Calu3 (cell line): ENCODE measurements at regions of chr3 and their contacts with region 1.

Region 1: DNA sequence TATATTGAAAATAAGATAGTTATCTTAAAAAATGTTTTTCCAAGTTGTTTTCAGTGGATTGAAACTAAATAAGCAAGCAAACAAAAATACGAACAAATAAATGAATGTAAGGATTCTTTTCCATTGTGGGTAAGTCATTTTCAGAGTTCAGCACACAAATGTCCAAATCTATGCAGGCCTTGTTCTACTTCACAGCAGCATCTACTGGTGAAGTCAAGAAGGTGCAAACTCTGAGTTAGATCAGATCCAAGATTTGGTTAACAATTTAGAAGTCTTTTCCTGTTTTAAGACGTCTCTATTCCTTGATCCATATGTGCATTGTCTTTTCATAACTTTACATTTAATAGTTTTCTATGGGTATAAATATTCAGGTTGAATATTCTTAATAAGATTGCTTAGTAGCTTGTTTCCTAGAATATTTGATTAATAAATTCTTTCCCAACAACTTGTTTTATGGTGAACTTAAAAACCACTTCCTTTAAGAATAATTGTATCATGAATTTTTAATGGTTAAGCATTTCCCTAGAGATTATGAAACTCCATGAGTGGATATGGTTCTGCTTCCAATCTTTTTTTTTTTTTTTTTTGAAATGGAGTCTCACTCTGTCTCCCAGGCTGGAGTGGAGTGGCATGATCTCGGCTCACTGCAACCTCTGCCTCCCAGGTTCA is 10.5 kb downstream of the PTX3 start:
- DNase-seq: peak; percentile 17
- H3K4me3 Mint-ChIP-seq: no peak overlapping the region
- H3K27ac Mint-ChIP-seq: no peak overlapping the region
- H3K4me1 Mint-ChIP-seq: no peaks in the 10 kb centered on the region
- H3K27me3 Mint-ChIP-seq: no peaks in the 10 kb centered on the region
- CTCF ChIP-seq: peak; percentile 54

Region 2: GRCh38 chr3:156705761-156706631 is 741.2 kb before region 1 on chr3:
- CTCF ChIA-PET with region 1: no interaction called
- intact Hi-C with region 1: no loop called
- DNase-seq: no peak
- H3K4me3 Mint-ChIP-seq: no peak overlapping the region
- H3K27ac Mint-ChIP-seq: peak overlapping the region; percentile 42
- H3K4me1 Mint-ChIP-seq: peaks cover 24% of the 10 kb centered on the region
- H3K27me3 Mint-ChIP-seq: no peaks in the 10 kb centered on the region
- CTCF ChIP-seq: no peak

Region 3: DNA sequence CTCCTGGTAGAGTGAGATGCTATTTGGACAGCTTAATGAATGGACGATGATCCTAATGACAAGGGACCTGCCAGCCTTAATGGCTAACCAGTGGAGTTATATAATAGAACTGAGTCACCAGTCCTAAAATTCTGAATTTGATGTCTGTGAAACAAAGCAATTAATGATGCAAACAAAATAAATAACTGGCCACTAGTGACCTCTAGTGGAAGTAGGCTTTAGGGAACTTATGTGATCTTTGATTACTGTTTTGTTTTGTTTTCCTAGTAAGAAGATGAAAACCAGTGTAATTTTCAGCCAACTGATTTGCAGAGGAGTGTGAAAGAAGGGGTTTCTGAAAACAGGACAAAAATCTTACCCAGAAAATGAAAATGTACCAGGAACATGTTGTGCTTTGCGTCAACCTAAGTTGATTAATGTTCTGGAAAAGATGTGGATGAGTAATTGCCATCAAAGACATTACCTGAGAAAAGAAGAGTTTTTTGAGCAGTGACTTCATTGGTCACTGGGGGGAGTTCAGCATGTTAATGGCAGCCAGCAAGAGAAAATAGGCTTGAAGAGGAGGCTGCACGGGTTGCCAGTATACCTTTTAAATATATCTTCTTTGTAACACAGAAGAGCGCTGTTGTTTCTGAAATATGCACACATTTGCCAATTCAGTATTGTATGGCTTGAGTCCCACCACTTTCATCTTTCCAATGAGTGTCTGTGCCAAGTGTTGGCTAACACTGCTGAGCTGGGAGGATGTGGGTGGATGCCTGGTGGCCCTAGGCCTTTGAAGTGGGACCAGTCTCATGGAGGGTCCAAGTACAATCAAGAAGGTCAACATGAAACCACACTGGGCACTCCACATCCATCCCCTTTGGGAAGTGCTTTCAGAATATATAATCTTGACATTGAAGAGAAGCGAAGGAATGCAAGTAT is 46.7 kb after region 1 on chr3:
- CTCF ChIA-PET with region 1: interaction called, 4 read pairs
- intact Hi-C with region 1: loop called (anchors 5 kb)
- DNase-seq: peak; percentile 36
- H3K4me3 Mint-ChIP-seq: no peak overlapping the region
- H3K27ac Mint-ChIP-seq: no peak overlapping the region
- H3K4me1 Mint-ChIP-seq: peaks cover 43% of the 10 kb centered on the region
- H3K27me3 Mint-ChIP-seq: no peaks in the 10 kb centered on the region
- CTCF ChIP-seq: peak; percentile 62

Region 4: DNA sequence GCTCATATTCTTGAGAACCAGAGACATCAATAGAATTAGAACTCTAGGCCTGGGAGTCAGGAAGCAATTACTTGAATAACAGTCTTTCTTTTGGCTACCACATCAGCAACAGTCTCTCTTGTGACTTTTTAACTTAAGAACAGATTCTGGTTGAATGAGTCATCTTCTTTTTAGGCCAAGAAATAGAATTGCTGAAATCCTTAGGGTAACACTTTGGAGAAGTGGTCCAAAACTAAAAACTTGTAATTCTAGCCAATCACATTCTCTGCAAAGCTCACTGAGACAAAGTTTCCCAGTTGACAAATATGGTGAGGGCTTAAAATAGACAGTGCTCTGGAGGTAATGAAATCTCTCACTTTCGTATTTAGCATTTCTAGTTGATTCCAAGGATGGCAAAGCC is 421.0 kb after region 1 on chr3:
- CTCF ChIA-PET with region 1: no interaction called
- intact Hi-C with region 1: no loop called
- DNase-seq: no peak
- H3K4me3 Mint-ChIP-seq: no peak overlapping the region
- H3K27ac Mint-ChIP-seq: no peak overlapping the region
- H3K4me1 Mint-ChIP-seq: no peaks in the 10 kb centered on the region
- H3K27me3 Mint-ChIP-seq: peaks cover 2% of the 10 kb centered on the region
- CTCF ChIP-seq: no peak